PC-9 (cell line): ENCODE measurements at regions of chr17 and their contacts with region 1.

Region 1: DNA sequence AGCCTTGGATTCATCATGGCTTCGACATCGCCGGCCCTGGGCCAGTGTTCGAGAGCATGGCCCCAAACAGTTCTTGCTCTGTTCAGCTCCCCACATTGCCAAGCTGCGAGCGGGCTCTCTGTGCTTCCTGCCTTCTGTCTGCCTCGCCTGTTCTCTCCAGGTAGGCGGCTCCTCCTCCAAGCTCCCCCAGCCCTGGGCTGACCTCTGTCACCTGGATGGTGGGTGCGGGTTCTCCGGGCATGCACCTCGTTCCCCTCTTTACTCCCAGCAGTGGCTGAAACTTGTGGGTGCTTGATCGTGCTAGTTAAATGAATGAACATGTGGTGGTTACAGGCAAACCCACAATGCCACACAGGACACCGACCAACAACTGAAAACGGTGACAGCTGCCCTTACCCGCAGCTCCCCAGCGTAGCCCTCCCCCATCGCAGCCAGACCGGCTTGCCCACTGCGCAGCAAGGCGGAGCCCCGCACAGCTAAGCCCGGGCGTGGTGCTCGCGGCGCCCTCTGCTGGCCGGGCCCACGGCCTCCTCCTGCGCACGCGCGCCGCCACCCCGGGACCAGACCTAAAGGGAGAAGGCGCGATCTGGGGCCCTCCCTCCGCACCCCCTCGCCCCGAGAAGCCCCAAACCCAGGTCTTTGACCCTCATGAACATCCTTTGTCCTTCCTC is 23.0 kb upstream of the EIF1 start:
- DNase-seq: peak; percentile 75 to 90
- H3K4me3 ChIP-seq: peak overlapping the region; percentile 46; the same call in 1 of the 2 replicates
- H3K27ac ChIP-seq: peak overlapping the region; percentile 29; the same call in 1 of the 2 replicates
- H3K4me1 ChIP-seq: peaks cover 26% of the 10 kb centered on the region
- H3K27me3 ChIP-seq: no peaks in the 10 kb centered on the region
- CTCF ChIP-seq: peak; percentile 91

Region 2: DNA sequence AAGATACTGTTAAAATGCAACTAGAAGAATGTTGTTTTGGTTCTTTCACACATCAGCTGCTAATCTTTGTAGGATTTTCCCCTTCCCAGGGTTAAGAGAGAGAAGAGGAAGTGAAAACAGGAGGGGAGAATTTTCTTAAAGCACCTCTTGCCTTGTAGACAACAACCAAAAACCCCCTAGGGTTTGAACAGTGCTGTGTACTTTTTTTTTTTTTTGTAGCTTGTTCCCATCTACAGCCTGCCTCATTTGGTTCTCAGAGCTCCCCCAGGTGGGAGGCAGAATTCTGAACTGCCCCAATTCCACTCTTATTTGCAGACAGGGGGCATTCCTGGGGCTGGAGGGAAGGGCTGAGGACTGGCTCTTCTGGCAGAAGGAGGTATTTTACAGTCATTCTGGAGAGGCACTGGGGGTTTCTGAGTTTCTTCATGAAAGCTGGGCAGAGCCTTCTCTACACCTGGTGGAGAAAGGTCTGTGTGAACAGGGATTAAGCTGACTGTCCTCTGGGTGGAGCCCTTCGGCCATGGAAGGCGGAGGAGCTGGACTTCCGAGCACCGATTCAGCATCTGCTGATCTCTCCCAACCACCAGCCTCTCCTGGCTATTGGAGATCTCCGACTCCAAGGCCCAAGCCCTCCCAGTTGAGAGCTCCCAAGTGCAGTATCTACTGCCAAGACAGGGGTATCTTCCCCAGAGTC is 1050.3 kb before region 1 on chr17:
- CTCF ChIA-PET with region 1: interaction called, 3 read pairs
- POLR2A ChIA-PET with region 1: no interaction called
- intact Hi-C with region 1: loop called (anchors 2 kb)
- DNase-seq: peak; percentile 72
- H3K4me3 ChIP-seq: no peak overlapping the region
- H3K27ac ChIP-seq: no peak overlapping the region
- H3K4me1 ChIP-seq: peaks cover 10% of the 10 kb centered on the region
- H3K27me3 ChIP-seq: no peaks in the 10 kb centered on the region
- CTCF ChIP-seq: peak; percentile 73

Region 3: DNA sequence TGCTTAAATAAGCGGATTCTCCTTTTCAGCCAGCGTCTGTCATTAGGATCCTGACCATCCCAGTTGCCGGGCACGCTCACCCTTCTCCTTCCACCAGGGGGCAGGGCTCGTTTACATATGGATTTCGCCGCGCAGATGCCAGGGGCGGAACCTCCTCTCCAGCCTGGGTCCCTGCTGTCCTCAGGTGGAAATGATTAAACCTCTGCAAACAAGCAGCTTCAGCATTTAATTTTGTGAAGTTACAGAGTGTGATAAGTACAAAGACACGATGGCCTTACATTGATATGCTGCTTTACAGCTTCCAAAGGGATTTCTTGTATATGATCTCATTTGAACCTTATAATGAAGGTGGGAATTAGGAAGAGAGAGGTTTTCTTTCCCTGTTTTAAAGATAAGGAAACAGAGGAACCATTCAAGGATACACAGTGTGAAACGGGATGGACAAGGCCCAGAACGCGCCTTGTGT is 862.1 kb before region 1 on chr17:
- CTCF ChIA-PET with region 1: no interaction called
- POLR2A ChIA-PET with region 1: no interaction called
- intact Hi-C with region 1: loop called (anchors 1 kb)
- DNase-seq: peak; percentile 74 to 82
- H3K4me3 ChIP-seq: no peak overlapping the region
- H3K27ac ChIP-seq: 0 out of 2 replicates have a peak overlapping the region, but pooled peaks have one; percentile 18
- H3K4me1 ChIP-seq: peaks cover 9% of the 10 kb centered on the region
- H3K27me3 ChIP-seq: no peaks in the 10 kb centered on the region
- CTCF ChIP-seq: peak; percentile 94

Region 4: GRCh38 chr17:41329281-41329948 is 336.3 kb before region 1 on chr17:
- CTCF ChIA-PET with region 1: no interaction called
- POLR2A ChIA-PET with region 1: no interaction called
- intact Hi-C with region 1: loop called (anchors 5 kb)
- DNase-seq: peak; percentile 47 to 65
- H3K4me3 ChIP-seq: no peak overlapping the region
- H3K27ac ChIP-seq: no peak overlapping the region
- H3K4me1 ChIP-seq: peaks cover 6% of the 10 kb centered on the region
- H3K27me3 ChIP-seq: no peaks in the 10 kb centered on the region
- CTCF ChIP-seq: peak; percentile 90

Region 5: GRCh38 chr17:41417576-41418015 is 248.1 kb before region 1 on chr17:
- CTCF ChIA-PET with region 1: interaction called, 5 read pairs
- POLR2A ChIA-PET with region 1: no interaction called
- intact Hi-C with region 1: loop called (anchors 5 kb)
- DNase-seq: peak; percentile 69 to 98
- H3K4me3 ChIP-seq: no peak overlapping the region
- H3K27ac ChIP-seq: peak overlapping the region; percentile 89
- H3K4me1 ChIP-seq: peaks cover 76% of the 10 kb centered on the region
- H3K27me3 ChIP-seq: no peaks in the 10 kb centered on the region
- CTCF ChIP-seq: peak; percentile 82

Region 6: DNA sequence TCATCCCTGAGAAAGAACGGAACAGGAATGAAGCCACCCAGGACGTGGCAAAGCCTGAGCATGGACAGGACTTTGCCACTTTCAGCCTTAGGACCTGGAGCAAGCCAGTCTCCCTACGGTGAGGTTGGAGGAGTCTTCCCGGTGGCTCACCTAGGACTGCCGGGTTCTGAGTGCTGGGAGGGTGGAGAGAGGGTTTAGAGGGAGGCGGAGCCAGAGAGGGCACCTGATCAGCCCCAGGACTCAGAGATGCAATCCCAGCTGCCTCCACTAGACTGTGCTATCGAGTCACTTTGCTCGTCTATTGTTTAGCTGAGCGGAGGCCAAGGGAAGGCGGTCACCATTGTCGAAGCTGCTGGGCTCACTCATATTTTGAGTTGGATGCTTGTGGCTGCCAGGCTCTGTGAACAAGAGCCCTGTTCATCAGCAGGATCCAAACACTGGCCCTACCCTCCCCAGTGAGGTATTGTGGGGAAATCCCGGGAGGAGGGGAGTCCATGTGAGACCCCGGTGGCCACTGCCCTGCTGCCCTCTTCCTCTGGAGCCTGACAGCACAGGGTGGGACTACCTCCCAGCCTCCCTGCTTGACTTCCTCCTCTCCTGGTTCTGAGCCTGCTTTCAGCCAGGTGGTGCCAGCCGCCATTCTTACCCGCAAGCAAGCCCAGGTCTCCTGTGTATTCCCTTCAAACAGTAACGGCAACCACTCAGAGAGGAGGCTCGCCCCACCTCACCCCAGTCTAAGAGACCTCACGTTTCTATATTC is 86.0 kb before region 1 on chr17:
- CTCF ChIA-PET with region 1: interaction called, 3 read pairs
- POLR2A ChIA-PET with region 1: no interaction called
- intact Hi-C with region 1: loop called (anchors 1 kb)
- DNase-seq: peak; percentile 62 to 90
- H3K4me3 ChIP-seq: no peak overlapping the region
- H3K27ac ChIP-seq: peak overlapping the region; percentile 37
- H3K4me1 ChIP-seq: peaks cover 56% of the 10 kb centered on the region
- H3K27me3 ChIP-seq: no peaks in the 10 kb centered on the region
- CTCF ChIP-seq: peak; percentile 84

Region 7: DNA sequence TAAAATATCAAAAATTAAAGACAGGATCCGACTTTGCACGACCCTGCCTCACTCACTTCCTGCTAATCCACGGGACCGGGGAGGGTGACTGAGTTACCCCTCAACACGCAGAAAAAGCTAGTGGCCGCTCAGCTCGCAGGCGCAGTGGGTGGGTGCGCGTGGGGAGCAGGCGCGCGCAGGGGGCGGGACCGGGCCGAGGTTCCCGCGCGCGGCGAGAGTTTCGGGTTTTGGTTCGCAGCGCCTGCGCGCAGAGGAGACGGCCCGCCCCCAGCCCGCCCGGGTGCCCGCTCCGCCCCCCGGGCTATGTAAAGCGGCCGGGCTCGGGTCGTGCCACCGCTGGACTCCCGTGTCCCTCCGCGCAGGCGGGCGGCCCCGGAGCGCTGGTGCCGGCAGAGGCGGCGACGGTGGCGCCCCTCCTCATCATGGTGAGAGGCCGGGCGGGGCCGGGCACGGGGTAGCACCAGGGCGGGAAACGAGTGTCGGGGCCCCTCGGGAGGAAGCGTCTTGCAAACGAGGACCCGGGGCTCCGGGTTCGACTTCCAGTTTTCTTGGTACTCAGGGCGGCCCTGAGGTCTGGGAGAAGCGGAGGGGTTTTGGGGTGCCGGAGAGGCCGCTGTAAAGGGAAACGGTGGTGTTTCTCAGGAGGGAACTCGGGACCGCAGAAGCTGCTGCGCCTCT is 300.9 kb after region 1 on chr17 and contains the start of gene CNP:
- CTCF ChIA-PET with region 1: no interaction called
- POLR2A ChIA-PET with region 1: no interaction called
- intact Hi-C with region 1: no loop called
- DNase-seq: peak; percentile 69 to 90
- H3K4me3 ChIP-seq: peak within 1 kb of the TSS; percentile 78
- H3K27ac ChIP-seq: peak within 1 kb of the TSS; percentile 93
- H3K4me1 ChIP-seq: peaks cover 11% of the 10 kb centered on the region
- H3K27me3 ChIP-seq: no peaks in the 10 kb centered on the region
- CTCF ChIP-seq: no peak
- total RNA-seq, gene CNP: 60.6 and 64.7 TPM in 2 replicates